HepG2 (cell line): ENCODE measurements at regions of chr10 and their contacts with region 1.

Region 1: GRCh38 chr10:92640110-92640509 is 47.2 kb downstream of the KIF11 start:
- DNase-seq: no peak
- ATAC-seq: no peak
- H3K4me3 ChIP-seq: no peak overlapping the region
- H3K27ac ChIP-seq: no peak overlapping the region
- H3K4me1 ChIP-seq: peaks cover 8% of the 10 kb centered on the region
- H3K27me3 ChIP-seq: no peaks in the 10 kb centered on the region
- CTCF ChIP-seq: no peak
- EP300 ChIP-seq: no peak
- POLR2A ChIP-seq: no peak
- RAD21 ChIP-seq: no peak

Region 2: GRCh38 chr10:92517034-92517655 is 123.0 kb before region 1 on chr10:
- CTCF ChIA-PET with region 1: no interaction called
- POLR2A ChIA-PET with region 1: no interaction called
- in situ Hi-C with region 1: no loop called
- intact Hi-C with region 1: loop called (anchors 10 kb)
- DNase-seq: peak; percentile 66
- ATAC-seq: peak; percentile 95
- H3K4me3 ChIP-seq: no peak overlapping the region
- H3K27ac ChIP-seq: no peak overlapping the region
- H3K4me1 ChIP-seq: no peaks in the 10 kb centered on the region
- H3K27me3 ChIP-seq: no peaks in the 10 kb centered on the region; a peak in 1 of 5 replicates
- CTCF ChIP-seq: peak; percentile 77
- EP300 ChIP-seq: no peak
- POLR2A ChIP-seq: no peak
- RAD21 ChIP-seq: no peak

Region 3: GRCh38 chr10:92567952-92568600 is 72.0 kb before region 1 on chr10:
- CTCF ChIA-PET with region 1: no interaction called
- POLR2A ChIA-PET with region 1: no interaction called
- in situ Hi-C with region 1: no loop called
- intact Hi-C with region 1: no loop called
- DNase-seq: no peak
- ATAC-seq: no peak
- H3K4me3 ChIP-seq: no peak overlapping the region
- H3K27ac ChIP-seq: no peak overlapping the region
- H3K4me1 ChIP-seq: peaks cover 38% of the 10 kb centered on the region
- H3K27me3 ChIP-seq: no peaks in the 10 kb centered on the region; a peak in 1 of 5 replicates
- CTCF ChIP-seq: no peak
- EP300 ChIP-seq: no peak
- POLR2A ChIP-seq: no peak
- RAD21 ChIP-seq: no peak

Region 4: DNA sequence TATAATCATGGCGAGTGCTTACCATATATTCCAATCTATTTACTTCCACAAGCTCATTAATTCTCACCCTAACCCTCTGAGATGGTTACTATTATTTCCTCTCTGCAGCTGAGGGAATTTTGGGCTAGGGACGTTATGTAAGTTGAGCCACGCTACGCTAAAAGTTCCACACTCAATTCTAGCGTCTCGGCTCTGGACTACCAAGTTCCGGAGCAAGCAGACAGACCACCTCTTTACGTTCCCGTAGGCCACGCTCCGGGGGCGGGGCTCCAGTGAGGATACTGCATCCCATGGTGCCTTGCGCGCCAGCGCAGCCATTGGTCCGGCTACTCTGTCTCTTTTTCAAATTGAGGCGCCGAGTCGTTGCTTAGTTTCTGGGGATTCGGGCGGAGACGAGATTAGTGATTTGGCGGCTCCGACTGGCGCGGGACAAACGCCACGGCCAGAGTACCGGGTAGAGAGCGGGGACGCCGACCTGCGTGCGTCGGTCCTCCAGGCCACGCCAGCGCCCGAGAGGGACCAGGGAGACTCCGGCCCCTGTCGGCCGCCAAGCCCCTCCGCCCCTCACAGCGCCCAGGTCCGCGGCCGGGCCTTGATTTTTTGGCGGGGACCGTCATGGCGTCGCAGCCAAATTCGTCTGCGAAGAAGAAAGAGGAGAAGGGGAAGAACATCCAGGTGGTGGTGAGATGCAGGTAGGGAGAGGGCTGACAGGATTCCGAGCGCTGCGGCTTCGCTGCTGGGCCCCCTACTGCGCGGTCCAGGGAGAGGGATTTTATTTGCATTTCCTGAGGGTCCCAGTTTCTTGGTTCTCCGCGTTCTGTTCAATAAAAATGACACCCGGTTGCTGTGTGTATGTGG is 47.1 kb before region 1 on chr10 and contains the start of gene KIF11:
- CTCF ChIA-PET with region 1: interaction called, 3 read pairs
- POLR2A ChIA-PET with region 1: no interaction called
- in situ Hi-C with region 1: no loop called
- intact Hi-C with region 1: loop called (anchors 10 kb)
- DNase-seq: peak; percentile 95
- ATAC-seq: peak; percentile 88
- H3K4me3 ChIP-seq: peak within 1 kb of the TSS; percentile 81 to 91 (median 88)
- H3K27ac ChIP-seq: peak within 1 kb of the TSS; percentile 88
- H3K4me1 ChIP-seq: peaks cover 37% of the 10 kb centered on the region
- H3K27me3 ChIP-seq: no peaks in the 10 kb centered on the region; a peak in 1 of 5 replicates
- CTCF ChIP-seq: peak; percentile 25; the same call in 1 of the 2 replicates
- EP300 ChIP-seq: 0 out of 4 replicates have a peak, but pooled peaks have one; percentile 18 to 35
- POLR2A ChIP-seq: peak; percentile 96 to 97
- RAD21 ChIP-seq: no peak
- total RNA-seq, gene KIF11: 38.4 and 62.8 TPM in 2 replicates